Mammary epithelial cell (primary cell): ENCODE measurements at regions of chr5 and their contacts with region 1.

Region 1: GRCh38 chr5:139439013-139439903 is at the start of gene DNAJC18:
- DNase-seq: peak; percentile 71
- H3K4me3 ChIP-seq: peak within 1 kb of the TSS; percentile 84 to 96 (median 94)
- H3K27ac ChIP-seq: peak within 1 kb of the TSS; percentile 81
- H3K4me1 ChIP-seq: peaks cover 22% of the 10 kb centered on the region
- H3K27me3 ChIP-seq: no peaks in the 10 kb centered on the region
- CTCF ChIP-seq: no peak
- total RNA-seq, gene DNAJC18: 6.7 to 12.9 TPM

Region 2: GRCh38 chr5:139341650-139342422 is 97.4 kb before region 1 on chr5 and contains the start of gene PAIP2:
- CTCF ChIA-PET with region 1: no interaction called
- dilution Hi-C with region 1: no loop called
- in situ Hi-C with region 1: no loop called
- intact Hi-C with region 1: no loop called
- DNase-seq: peak; percentile 96
- H3K4me3 ChIP-seq: peak within 1 kb of the TSS; percentile 85 to 92 (median 86)
- H3K27ac ChIP-seq: peak within 1 kb of the TSS; percentile 91
- H3K4me1 ChIP-seq: peaks cover 19% of the 10 kb centered on the region
- H3K27me3 ChIP-seq: no peaks in the 10 kb centered on the region
- CTCF ChIP-seq: peak; percentile 51 to 81
- total RNA-seq, gene PAIP2: 38.0 to 43.6 TPM

Region 3: GRCh38 chr5:139389701-139390638 is 49.3 kb before region 1 on chr5 and contains the start of gene MZB1:
- CTCF ChIA-PET with region 1: no interaction called
- dilution Hi-C with region 1: no loop called
- in situ Hi-C with region 1: no loop called
- intact Hi-C with region 1: loop called (anchors 2 kb)
- DNase-seq: no peak
- H3K4me3 ChIP-seq: no peak within 1 kb of the TSS
- H3K27ac ChIP-seq: no peak within 1 kb of the TSS
- H3K4me1 ChIP-seq: peaks cover 26% of the 10 kb centered on the region
- H3K27me3 ChIP-seq: peaks cover 14% of the 10 kb centered on the region
- CTCF ChIP-seq: no peak
- total RNA-seq, gene MZB1: not detected

Region 4: DNA sequence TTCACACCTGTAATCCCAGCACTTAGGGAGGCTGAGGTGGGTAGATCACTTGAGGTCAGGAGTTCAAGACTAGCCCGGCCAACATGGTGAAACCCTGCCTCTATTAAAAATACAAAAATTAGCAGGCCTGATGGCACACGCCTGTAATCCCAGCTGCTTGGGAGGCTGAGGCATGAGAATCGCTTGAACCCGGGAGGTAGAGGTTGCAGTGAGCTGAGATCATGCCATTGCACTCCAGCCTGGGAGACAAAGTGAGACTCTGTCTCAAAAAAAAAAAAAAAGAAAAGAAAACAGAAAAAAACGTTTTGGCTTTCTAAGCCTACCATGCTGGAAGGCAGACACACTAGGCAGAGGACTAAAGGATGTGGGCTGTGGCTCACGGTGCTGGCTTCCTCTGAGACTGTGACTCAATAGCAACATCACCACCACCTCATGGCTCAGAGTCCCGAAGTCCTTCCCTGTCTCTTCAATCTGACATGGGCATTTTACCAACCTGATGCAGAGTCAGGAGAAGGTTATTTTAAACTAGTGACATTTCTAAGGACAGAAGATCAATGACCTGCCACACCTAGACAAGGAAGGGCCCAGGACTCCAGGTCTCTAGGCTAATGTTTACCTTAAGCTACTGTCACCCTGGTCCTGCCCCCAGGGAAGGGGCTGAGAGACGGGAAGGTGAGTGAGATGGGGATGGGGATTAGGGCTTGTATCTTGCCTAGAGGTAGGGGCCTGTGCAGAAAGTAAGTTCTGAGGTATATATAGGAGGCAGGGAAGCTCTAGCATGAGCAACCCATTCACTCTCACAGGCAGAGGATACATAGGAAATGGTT is 19.5 kb after region 1 on chr5:
- CTCF ChIA-PET with region 1: no interaction called
- dilution Hi-C with region 1: no loop called
- in situ Hi-C with region 1: no loop called
- intact Hi-C with region 1: loop called (anchors 2 kb)
- DNase-seq: peak; percentile 73
- H3K4me3 ChIP-seq: no peak overlapping the region
- H3K27ac ChIP-seq: no peak overlapping the region
- H3K4me1 ChIP-seq: peaks cover 8% of the 10 kb centered on the region
- H3K27me3 ChIP-seq: no peaks in the 10 kb centered on the region
- CTCF ChIP-seq: no peak

Region 5: GRCh38 chr5:139473565-139473964 is 34.3 kb after region 1 on chr5:
- CTCF ChIA-PET with region 1: no interaction called
- dilution Hi-C with region 1: no loop called
- in situ Hi-C with region 1: no loop called
- intact Hi-C with region 1: loop called (anchors 2 kb)
- DNase-seq: peak; percentile 61
- H3K4me3 ChIP-seq: no peak overlapping the region
- H3K27ac ChIP-seq: no peak overlapping the region
- H3K4me1 ChIP-seq: peaks cover 15% of the 10 kb centered on the region
- H3K27me3 ChIP-seq: no peaks in the 10 kb centered on the region
- CTCF ChIP-seq: peak in 1 of 2 donors; percentile 34